Common myeloid progenitor, CD34-positive (primary cell): ENCODE measurements at regions of chr17 and their contacts with region 1.

Region 1: DNA sequence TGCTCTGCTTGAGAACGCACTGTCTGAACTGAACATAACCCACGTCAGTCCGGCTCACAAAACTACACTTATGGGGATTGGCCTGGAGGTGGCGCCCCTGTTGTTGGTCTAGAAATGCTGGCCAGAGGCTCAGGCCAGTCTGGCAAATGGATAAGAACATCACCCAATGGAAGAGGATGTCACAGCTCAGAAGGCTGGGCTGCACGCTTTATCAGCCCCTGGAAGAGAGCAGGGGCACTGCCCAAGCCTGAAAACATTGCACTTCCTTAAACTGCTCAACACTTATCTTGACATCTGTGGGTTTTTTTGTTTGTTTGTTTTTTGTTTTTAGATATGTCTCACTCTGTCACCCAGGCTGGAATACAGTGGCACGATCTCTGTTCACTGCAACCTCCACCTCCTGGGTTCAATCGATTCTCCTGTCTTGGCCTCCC is 24.8 kb upstream of the BPTF start:
- DNase-seq: peak; percentile 85 to 94 (median 92)
- H3K4me3 ChIP-seq: peak overlapping the region in 1 of 7 experiments; percentile 42
- H3K27ac ChIP-seq: no peak overlapping the region
- H3K4me1 ChIP-seq: peaks cover 0 to 16% (median 2%) of the 10 kb centered on the region in 4 experiments
- H3K27me3 ChIP-seq: no peaks in the 10 kb centered on the region

Region 2: DNA sequence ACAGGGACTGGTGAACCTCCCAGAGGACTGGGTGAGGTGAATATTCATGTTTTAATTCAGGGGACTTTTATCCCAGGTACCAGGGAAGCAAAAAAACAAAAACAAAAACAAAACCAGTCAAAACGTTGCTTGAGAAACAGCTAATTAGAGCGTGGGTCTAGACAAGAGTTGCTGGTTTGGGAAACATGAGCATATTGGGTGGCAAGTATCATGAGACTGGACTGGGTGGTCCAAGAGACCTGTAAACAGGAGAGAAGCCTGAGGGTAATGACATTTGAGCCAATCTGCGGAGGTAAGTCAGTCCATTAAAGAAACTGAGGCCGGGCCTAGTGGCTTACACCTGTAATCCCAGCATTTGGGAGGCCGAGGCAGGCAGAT is 13.3 kb after region 1 on chr17:
- CTCF ChIA-PET with region 1: interaction called, 14 read pairs
- POLR2A ChIA-PET with region 1: no interaction called
- DNase-seq: no peak
- H3K4me3 ChIP-seq: no peak overlapping the region
- H3K27ac ChIP-seq: no peak overlapping the region
- H3K4me1 ChIP-seq: no peaks in the 10 kb centered on the region
- H3K27me3 ChIP-seq: peaks cover 0 to 2% (median 0%) of the 10 kb centered on the region in 5 experiments

Region 3: DNA sequence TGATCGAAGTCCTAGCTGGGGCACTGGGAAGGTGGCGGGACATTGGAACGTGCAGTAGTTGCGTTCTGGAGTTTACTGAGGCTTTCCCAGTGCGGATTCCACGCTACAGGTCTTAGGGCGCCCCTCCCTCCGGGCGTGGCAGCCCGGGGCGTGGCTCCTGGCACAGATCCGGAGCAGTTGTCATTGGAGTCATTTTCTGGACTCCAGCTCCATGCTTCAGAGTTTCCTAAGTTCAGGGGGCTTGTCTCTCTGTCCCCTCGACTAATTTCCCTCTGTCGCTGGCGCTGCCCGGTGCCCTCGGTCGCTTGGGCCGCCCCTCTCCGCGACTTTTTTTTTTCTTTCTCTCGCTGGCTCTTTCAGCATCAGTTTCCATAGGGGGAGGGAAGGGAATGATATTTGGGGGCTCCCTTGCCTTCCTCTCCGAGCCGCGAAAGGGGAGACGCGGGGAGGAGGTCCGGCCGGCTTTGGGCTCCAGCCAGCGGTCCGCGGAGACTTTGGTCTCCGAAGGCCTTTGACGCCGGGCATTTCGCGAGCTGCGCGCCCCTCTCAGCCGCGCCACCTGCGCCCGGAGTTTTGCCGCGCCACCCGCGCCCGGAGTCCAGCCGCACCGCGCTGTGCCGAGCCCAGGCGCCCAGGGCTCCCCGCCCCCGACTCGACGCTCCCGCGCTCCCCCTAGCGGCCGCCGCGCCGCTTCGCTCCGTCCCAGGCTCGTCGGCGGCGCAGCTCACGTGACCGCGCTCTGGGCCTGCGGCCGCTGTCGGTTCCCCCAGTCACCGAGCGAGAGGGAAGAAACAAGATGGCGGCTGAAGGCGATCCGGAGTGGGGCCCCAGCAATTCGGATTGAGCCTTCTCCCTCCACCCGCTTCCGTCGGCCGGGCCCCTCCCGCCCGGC is 24.5 kb after region 1 on chr17 and contains the start of gene BPTF:
- CTCF ChIA-PET with region 1: interaction called, 14 read pairs
- POLR2A ChIA-PET with region 1: interaction called, 4 read pairs
- DNase-seq: peak; percentile 93 to 96 (median 96)
- H3K4me3 ChIP-seq: peak within 1 kb of the TSS; percentile 81 to 94 (median 91)
- H3K27ac ChIP-seq: peak within 1 kb of the TSS; percentile 46 to 82
- H3K4me1 ChIP-seq: peaks cover 0 to 34% (median 25%) of the 10 kb centered on the region in 4 experiments
- H3K27me3 ChIP-seq: no peaks in the 10 kb centered on the region